ENCODE measurements at regions of chr2 and their contacts with region 1.

Region 1: GRCh38 chr2:179218848-179219594 is 45.6 kb downstream of the SESTD1 start:
- DNase-seq: peak; percentile 27 to 80
- ATAC-seq: peak; percentile 50 to 80 (median 61)
- H3K4me3 ChIP-seq: no peak overlapping the region
- H3K4me3 Mint-ChIP-seq: no peak overlapping the region
- H3K27ac ChIP-seq: no peak overlapping the region
- H3K27ac Mint-ChIP-seq: no peak overlapping the region
- H3K4me1 ChIP-seq: no peaks in the 10 kb centered on the region
- H3K4me1 Mint-ChIP-seq: peaks cover 7% of the 10 kb centered on the region in 2 donors
- H3K27me3 ChIP-seq: no peaks in the 10 kb centered on the region
- H3K27me3 Mint-ChIP-seq: no peaks in the 10 kb centered on the region
- CTCF ChIP-seq: peak; percentile 89

Region 2: DNA sequence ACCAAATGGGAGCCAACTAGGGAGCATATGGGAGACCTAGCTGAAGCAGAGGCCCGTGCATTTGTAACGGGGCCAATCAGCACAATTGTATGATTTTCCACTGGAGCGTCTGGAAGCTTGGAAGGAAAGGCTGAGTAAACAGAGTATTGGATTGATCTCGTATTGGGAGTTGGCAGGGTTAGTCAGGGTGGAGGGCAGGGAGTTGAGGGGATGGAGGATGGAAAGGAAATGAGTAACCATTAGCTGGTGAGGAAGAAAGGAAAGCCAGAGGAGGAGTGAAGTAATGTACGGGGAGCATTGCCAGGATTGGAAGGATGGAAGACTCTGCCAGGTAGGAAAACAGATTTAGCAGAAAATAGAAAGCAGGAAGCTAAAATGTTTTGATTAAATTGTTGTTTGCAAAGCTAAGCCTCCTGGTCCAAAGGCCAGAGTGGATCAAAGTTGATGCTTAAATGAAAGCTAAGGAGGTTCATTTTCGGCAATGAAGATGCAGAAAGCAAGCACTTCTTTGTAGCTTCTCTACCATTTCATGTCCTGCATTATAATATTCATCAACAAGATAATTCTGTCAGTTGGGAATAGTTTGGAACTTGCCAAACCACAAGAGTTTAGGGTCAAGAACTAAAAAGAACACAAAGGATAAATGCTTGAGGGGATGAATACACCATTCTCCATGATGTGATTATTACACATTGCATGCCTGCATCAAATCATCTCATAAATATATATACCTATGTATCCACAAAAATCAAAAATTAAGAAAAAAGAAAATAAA is 336.2 kb before region 1 on chr2:
- intact Hi-C with region 1: no loop called
- DNase-seq: no peak
- ATAC-seq: no peak
- H3K4me3 ChIP-seq: no peak overlapping the region
- H3K4me3 Mint-ChIP-seq: no peak overlapping the region
- H3K27ac ChIP-seq: no peak overlapping the region
- H3K27ac Mint-ChIP-seq: no peak overlapping the region
- H3K4me1 ChIP-seq: no peaks in the 10 kb centered on the region
- H3K4me1 Mint-ChIP-seq: no peaks in the 10 kb centered on the region
- H3K27me3 ChIP-seq: no peaks in the 10 kb centered on the region
- H3K27me3 Mint-ChIP-seq: no peaks in the 10 kb centered on the region
- CTCF ChIP-seq: no peak

Region 3: DNA sequence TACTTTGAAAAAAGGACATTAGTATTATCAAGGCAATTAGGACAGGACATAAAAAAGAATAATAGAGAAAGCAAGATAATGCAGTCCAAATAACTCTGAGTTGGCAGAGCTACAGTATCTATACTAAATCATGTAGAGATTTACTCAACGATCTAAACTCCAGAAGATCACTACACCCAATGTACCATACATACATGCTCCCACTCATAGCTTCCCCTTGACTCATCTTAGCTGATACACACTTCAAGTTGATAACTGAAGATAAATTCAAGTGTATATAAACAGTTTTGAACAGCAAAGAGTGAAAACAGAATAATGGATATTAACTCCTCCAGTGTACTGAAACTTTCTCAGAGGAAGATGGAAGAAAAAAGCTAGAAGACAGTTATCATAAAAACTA is 32.9 kb before region 1 on chr2:
- intact Hi-C with region 1: no loop called
- DNase-seq: peak in 1 of 2 donors; percentile 0
- ATAC-seq: no peak
- H3K4me3 ChIP-seq: no peak overlapping the region
- H3K4me3 Mint-ChIP-seq: no peak overlapping the region
- H3K27ac ChIP-seq: no peak overlapping the region
- H3K27ac Mint-ChIP-seq: no peak overlapping the region
- H3K4me1 ChIP-seq: no peaks in the 10 kb centered on the region
- H3K4me1 Mint-ChIP-seq: peaks cover 0 to 13% of the 10 kb centered on the region in 2 donors
- H3K27me3 ChIP-seq: no peaks in the 10 kb centered on the region
- H3K27me3 Mint-ChIP-seq: no peaks in the 10 kb centered on the region
- CTCF ChIP-seq: no peak

Region 4: DNA sequence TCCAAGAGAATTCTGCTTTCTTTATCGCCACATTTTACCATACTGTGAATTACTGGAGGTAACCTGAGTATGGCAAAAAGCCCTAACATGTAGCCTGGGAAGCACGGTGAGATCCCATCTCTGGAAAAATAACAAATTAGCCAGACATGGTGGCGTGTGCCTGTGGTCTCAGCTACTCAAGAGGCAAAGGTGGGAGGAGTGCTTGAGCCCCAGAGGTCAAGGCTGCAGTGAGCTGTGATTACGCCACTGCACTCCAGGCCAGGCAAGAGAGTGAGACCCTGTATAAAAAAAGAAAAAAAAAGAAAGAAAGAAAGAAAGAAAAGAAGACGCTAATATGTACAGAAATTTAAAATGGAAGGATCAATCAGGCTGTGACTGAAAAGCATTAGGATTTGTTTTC is 103.3 kb after region 1 on chr2:
- intact Hi-C with region 1: no loop called
- DNase-seq: no peak
- ATAC-seq: no peak
- H3K4me3 ChIP-seq: no peak overlapping the region
- H3K4me3 Mint-ChIP-seq: no peak overlapping the region
- H3K27ac ChIP-seq: no peak overlapping the region
- H3K27ac Mint-ChIP-seq: no peak overlapping the region
- H3K4me1 ChIP-seq: no peaks in the 10 kb centered on the region
- H3K4me1 Mint-ChIP-seq: no peaks in the 10 kb centered on the region
- H3K27me3 ChIP-seq: no peaks in the 10 kb centered on the region
- H3K27me3 Mint-ChIP-seq: peaks cover 4 to 14% of the 10 kb centered on the region in 2 donors
- CTCF ChIP-seq: no peak

Region 5: GRCh38 chr2:179340668-179341067 is 121.6 kb after region 1 on chr2:
- intact Hi-C with region 1: loop called (anchors 5 kb)
- DNase-seq: peak in 1 of 2 donors; percentile 26
- ATAC-seq: peak in 1 of 3 donors; percentile 41
- H3K4me3 ChIP-seq: no peak overlapping the region
- H3K4me3 Mint-ChIP-seq: no peak overlapping the region
- H3K27ac ChIP-seq: no peak overlapping the region
- H3K27ac Mint-ChIP-seq: no peak overlapping the region
- H3K4me1 ChIP-seq: no peaks in the 10 kb centered on the region
- H3K4me1 Mint-ChIP-seq: no peaks in the 10 kb centered on the region
- H3K27me3 ChIP-seq: no peaks in the 10 kb centered on the region
- H3K27me3 Mint-ChIP-seq: peaks cover 0 to 2% of the 10 kb centered on the region in 2 donors
- CTCF ChIP-seq: no peak

Region 6: DNA sequence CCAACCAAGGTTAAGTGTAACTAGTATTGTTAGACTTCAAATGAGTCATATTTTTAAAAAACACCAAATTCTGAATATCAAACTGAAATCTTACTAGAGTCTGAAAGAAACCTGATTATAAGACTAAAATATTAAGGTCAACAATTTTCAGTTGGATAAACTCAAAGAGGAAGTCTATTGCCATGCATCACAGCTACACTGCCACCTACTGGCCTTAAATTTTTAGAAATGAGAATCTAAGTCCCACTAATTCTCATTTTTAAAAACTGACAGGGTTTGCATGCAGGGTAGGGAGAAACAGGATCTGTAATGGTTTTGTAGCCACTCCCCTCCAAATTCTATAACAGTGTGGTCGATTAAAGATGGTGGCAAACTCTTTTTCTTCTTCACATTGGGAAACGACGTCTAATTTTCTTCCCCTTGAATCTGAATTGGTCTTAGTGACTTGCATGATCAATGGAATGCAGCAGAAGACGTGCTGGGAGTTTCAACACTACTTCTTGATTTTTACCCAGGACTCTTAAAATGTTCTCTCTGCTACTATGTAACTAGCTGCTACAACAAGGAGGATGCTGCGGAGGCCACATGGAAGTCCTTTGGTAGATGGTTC is 221.7 kb after region 1 on chr2:
- intact Hi-C with region 1: loop called (anchors 1 kb)
- DNase-seq: peak in 1 of 2 donors; percentile 59
- ATAC-seq: peak in 1 of 3 donors; percentile 45
- H3K4me3 ChIP-seq: no peak overlapping the region
- H3K4me3 Mint-ChIP-seq: no peak overlapping the region
- H3K27ac ChIP-seq: no peak overlapping the region
- H3K27ac Mint-ChIP-seq: no peak overlapping the region
- H3K4me1 ChIP-seq: no peaks in the 10 kb centered on the region
- H3K4me1 Mint-ChIP-seq: no peaks in the 10 kb centered on the region
- H3K27me3 ChIP-seq: no peaks in the 10 kb centered on the region
- H3K27me3 Mint-ChIP-seq: peaks cover 4 to 38% of the 10 kb centered on the region in 2 donors
- CTCF ChIP-seq: peak; percentile 51

Region 7: DNA sequence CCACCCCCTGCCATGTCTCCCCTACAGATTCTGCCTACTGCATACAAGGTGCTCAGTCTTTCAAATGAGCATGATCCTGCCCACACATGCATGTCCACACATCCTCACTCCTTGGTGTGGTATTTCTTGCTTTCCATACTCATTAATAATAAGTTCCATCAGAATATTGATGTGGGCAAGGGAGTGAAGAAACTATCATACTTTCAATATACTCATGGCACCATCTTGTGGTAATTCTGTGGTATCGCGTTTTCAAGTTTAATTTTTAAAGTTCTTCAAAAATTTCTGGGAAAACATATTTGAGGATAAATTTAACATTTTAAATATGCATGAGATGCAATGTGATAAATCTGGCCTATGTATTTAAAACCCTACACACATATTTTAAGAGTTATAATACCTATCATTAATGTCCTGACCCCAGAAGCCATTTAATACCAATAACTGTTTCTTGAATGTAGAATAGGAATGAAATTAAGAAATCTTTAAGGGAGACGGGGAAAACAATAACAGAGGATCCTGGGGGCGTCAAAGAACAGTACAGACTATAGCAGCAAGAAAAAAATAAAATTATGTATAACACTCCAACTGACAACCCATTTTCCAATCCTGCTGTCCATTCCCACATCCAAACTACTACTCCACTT is 532.3 kb after region 1 on chr2:
- intact Hi-C with region 1: loop called (anchors 5 kb)
- DNase-seq: peak in 1 of 2 donors; percentile 4
- ATAC-seq: no peak
- H3K4me3 ChIP-seq: no peak overlapping the region
- H3K4me3 Mint-ChIP-seq: no peak overlapping the region
- H3K27ac ChIP-seq: no peak overlapping the region
- H3K27ac Mint-ChIP-seq: no peak overlapping the region
- H3K4me1 ChIP-seq: no peaks in the 10 kb centered on the region
- H3K4me1 Mint-ChIP-seq: no peaks in the 10 kb centered on the region
- H3K27me3 ChIP-seq: peaks cover 2% of the 10 kb centered on the region
- H3K27me3 Mint-ChIP-seq: no peaks in the 10 kb centered on the region
- CTCF ChIP-seq: peak; percentile 22